Ascending aorta (tissue), 2 donors: ENCODE measurements at regions of chr17 and their contacts with region 1.

Region 1: DNA sequence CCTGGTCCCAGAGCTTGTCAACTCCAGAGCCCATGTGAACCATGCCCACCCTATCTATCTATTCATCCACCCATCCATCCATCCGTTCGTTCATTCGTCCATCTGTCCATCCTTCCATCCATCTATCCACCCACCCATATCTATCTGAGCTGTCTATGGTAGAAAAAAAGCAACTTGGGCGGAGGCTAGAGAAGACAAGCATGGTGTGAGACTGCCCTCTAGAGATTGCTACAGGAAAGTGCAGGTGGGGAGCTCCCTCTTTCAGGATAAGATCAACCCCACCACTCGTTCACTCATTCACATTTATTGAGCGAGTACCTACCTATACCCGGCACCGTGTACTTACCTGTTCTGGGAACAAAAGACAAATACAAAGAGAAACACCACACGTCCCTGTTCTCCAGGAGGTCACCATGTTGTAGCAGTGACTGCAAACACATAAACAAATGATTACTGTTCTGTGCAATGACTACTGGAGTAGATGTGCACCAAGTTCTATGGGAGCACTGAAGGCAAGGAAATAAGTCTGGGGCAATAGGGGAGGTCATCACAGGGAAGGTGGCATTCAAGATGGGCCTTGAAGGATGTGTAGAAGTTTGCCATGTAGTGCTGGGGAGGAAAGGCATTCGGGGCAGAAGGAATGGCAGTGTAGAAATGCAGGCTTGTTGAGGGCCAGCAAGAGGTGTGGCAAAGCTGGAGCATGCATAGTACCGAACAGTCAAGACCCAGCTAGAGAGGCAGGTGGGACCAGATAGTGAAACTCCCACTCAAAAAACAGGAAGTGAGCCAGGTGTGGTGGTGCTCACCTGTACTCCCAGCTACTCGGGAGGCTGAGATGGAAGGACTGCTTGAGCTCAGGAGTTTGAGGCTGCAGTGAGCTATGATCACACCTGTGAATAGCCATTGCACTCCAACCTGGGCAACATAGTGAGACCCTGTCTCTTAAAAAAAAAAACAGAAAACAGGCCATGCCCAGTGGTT is 13.4 kb upstream of the ATP5MC1 start:
- DNase-seq: no peak
- H3K4me3 ChIP-seq: no peak overlapping the region
- H3K27ac ChIP-seq: no peak overlapping the region
- H3K4me1 ChIP-seq: no peaks in the 10 kb centered on the region
- H3K27me3 ChIP-seq: no peaks in the 10 kb centered on the region
- CTCF ChIP-seq: peak; percentile 90 to 92 (median 92)

Region 2: DNA sequence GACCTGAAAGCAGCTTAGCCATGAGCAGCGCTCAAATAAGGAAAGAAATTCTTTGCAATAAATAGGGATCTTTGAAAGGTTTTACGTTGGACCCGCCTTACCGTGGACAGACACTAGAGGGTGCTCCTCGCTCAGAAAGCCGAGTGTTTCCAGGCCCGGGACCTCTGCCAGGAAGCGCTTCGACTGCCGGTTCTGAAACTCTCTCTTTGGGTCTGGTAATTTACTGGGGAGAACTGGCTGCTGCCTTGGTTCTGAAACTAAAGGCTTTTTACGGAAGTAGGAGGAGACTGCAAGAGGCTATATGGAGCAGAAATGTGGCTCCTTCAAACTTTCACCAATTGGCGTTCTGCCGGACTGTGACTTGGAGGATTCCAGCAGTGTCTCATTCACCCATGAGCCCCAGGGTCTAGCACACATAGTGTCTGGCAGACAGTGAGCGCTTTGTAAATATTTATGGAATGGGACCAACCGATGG is 207.5 kb before region 1 on chr17:
- intact Hi-C with region 1: loop called (anchors 5 kb)
- DNase-seq: peak in 1 of 2 donors; percentile 87
- H3K4me3 ChIP-seq: peak overlapping the region in 1 of 2 donors; percentile 42
- H3K27ac ChIP-seq: no peak overlapping the region
- H3K4me1 ChIP-seq: peaks cover 0 to 3% of the 10 kb centered on the region in 2 donors
- H3K27me3 ChIP-seq: no peaks in the 10 kb centered on the region
- CTCF ChIP-seq: peak; percentile 70 to 91 (median 87)

Region 3: DNA sequence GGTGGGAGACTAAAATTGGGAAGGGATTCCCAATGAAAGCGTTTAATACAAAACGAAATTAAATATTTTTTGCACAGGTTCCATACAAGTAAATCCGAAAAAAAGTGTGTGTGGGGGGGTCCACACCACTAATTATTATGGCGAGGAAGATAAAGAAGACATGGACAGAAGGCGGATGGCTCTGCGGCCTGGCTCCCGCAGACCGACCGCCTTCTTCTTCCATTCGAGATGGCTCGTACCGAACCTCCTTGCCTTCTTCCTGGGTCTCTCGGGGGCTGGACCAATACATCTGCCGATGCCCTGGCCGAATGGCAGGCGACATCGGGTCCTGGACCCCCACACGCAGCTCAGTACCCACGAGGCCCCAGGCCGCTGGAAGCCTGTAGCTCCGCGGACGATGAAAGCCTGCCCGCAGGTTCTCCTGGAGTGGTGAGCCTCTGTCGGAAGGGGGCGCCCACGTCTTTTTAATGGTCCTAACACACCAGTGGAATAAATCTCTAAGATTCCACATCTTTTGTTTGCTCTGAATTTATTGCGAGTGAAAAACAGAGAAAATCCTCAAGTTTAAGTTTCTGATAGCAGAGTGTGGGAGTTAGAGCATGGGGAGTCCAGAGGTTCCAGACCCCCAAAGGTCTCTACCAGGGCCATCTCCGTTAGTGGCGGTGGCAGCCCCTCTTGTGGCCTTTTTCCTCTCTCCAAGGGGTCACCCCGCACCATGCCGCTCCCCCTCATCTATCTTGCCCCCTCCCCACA is 154.8 kb before region 1 on chr17:
- intact Hi-C with region 1: loop called (anchors 2 kb)
- DNase-seq: peak in 1 of 2 donors; percentile 89
- H3K4me3 ChIP-seq: peak overlapping the region in 1 of 2 donors; percentile 19
- H3K27ac ChIP-seq: no peak overlapping the region
- H3K4me1 ChIP-seq: peaks cover 6 to 11% of the 10 kb centered on the region in 2 donors
- H3K27me3 ChIP-seq: peaks cover 65% of the 10 kb centered on the region
- CTCF ChIP-seq: peak; percentile 53 to 77 (median 62)

Region 4: DNA sequence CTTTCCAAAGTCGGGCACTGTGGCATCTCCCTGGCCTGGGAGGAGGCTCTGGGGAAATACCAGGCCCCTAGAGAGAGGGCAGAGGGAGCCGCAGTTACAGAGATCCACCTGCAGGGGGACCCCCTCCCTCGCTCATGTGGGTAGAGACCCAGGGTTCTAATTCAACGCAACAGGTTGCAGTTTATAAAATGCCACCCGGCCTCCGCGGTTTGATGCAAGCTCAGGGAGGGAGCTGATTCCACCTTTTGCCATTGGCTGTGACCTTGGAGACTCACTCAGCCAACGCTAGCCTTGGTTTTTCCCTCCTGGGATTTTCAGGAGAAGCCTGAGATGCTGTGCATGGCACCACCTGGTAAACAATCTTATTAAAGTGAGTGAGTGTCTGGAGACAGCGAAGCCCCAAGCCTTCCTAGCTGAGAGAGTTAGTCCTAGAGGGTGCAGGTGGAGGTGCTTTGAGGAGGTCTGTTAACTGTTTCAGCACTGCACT is 74.2 kb before region 1 on chr17:
- intact Hi-C with region 1: loop called (anchors 1 kb)
- DNase-seq: peak in 1 of 2 donors; percentile 70
- H3K4me3 ChIP-seq: no peak overlapping the region
- H3K27ac ChIP-seq: no peak overlapping the region
- H3K4me1 ChIP-seq: no peaks in the 10 kb centered on the region
- H3K27me3 ChIP-seq: no peaks in the 10 kb centered on the region
- CTCF ChIP-seq: peak; percentile 84 to 94 (median 88)

Region 5: GRCh38 chr17:48814504-48814903 is 64.7 kb before region 1 on chr17:
- intact Hi-C with region 1: loop called (anchors 2 kb)
- DNase-seq: peak in 1 of 2 donors; percentile 72
- H3K4me3 ChIP-seq: no peak overlapping the region
- H3K27ac ChIP-seq: no peak overlapping the region
- H3K4me1 ChIP-seq: peaks cover 6 to 15% of the 10 kb centered on the region in 2 donors
- H3K27me3 ChIP-seq: no peaks in the 10 kb centered on the region
- CTCF ChIP-seq: peak; percentile 42 to 63 (median 59)

Region 6: GRCh38 chr17:48997083-48997826 is 118.0 kb after region 1 on chr17 and contains the start of gene IGF2BP1:
- intact Hi-C with region 1: no loop called
- DNase-seq: no peak
- H3K4me3 ChIP-seq: peak within 1 kb of the TSS; percentile 40 to 52
- H3K27ac ChIP-seq: no peak within 1 kb of the TSS
- H3K4me1 ChIP-seq: peaks cover 5 to 18% of the 10 kb centered on the region in 2 donors
- H3K27me3 ChIP-seq: peaks cover 46% of the 10 kb centered on the region
- CTCF ChIP-seq: no peak
- total RNA-seq, gene IGF2BP1: not detected

Region 7: DNA sequence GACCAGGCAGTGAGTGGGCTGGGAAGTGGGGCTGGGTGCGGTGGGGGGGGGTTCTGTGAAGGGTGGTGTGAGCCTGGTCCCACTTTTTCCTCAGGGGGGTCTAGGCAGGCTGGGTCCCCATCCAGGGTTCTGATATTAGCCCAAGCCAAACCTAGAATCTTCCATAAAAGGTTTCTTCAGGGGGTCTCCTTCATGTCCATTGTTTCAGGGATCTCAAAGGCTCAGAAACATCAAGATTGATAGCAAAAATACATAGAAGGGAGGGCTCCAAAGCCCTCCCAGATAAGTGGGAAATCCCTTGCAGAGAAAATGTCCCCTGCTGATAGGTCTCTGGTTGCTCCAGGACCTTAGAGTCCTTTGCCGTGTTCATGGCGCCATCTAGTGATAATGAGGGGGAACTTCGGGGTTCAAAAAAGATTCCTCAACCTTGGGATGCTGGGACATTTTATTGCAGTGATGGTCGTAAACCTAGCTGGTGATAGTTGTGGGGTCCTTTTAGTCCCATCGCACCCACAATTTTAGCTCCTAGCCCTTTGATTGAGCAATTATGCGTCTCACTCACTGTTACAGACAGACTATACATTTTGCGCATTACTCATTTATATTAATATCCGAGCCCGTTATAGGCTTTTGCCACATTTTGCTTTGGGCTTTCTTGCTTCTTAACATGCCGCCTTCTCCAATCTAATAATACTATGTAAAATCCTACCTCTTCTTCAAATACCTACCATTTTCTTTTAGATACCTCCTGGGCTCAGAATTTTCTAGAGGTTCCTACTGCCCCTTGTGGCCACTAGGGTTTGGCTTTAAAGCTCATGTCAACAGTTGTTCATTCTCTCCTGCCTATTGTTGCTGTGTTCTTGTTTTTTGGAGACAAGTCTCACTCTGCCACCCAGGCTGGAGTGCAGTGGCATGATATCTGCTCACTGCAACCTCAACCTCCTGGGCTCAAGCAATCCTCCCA is 153.0 kb after region 1 on chr17:
- intact Hi-C with region 1: loop called (anchors 1 kb)
- DNase-seq: no peak
- H3K4me3 ChIP-seq: no peak overlapping the region
- H3K27ac ChIP-seq: no peak overlapping the region
- H3K4me1 ChIP-seq: no peaks in the 10 kb centered on the region
- H3K27me3 ChIP-seq: no peaks in the 10 kb centered on the region
- CTCF ChIP-seq: peak; percentile 55 to 77 (median 72)